Ovary (tissue), 10 donors: ENCODE measurements at regions of chr2 and their contacts with region 1.

Region 1: GRCh38 chr2:231104115-231104713 is 20.6 kb downstream of the HTR2B start:
- DNase-seq: peak; percentile 43 to 79 (median 65)
- H3K4me3 ChIP-seq: no peak overlapping the region
- H3K27ac ChIP-seq: no peak overlapping the region
- H3K4me1 ChIP-seq: no peaks in the 10 kb centered on the region
- H3K27me3 ChIP-seq: no peaks in the 10 kb centered on the region
- CTCF ChIP-seq: peak; percentile 78 to 90 (median 88)
- EP300 ChIP-seq: no peak
- POLR2A ChIP-seq: no peak

Region 2: DNA sequence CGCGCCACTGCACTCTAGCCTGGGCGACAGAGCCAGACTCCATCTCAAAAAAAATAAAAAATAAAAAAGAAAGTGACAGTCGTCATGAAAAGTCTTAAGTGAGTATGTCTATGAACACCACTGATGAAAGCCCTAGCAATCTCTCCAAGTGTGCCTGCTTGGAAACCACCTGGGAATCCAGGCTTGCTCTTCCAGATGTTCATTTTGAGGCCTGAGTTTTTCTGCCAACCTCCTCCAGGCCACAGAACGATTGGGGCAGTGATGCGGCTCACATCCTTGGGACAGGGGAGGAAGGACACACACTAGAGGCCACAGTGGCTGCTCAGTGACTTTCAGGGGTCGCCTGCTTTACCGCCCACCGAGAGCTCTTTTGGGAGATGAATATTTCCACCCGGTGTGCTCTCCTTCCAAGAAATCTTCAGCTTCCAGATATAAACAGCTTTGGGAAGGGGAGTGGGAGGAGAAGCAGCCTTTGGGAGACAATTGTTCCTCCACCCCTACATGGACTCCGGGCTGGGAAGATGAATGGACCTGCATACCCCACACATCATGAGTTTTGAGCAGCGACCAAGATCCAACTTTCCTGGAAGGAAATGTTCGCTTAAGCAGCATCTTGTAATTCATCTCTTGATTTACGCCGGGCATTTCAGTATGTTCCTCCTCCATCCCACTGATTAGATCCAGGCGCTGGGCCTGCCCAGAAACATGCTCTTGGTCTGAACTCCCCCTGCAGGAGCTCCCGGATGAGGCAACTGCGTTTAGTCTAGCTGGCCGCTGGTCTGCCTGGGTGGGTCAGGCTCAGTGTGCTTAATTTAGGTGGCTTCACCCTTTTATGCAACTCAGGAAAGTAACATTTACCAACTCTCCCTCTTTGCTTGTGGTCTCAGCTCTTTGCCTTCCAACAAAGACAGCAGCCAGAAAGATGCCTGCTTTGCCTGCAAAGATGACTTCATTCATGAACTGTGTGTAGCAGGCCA is 88.0 kb after region 1 on chr2:
- intact Hi-C with region 1: loop called (anchors 5 to 10 kb)
- DNase-seq: peak; percentile 81 to 89 (median 85)
- H3K4me3 ChIP-seq: no peak overlapping the region
- H3K27ac ChIP-seq: peak overlapping the region; percentile 69 to 88
- H3K4me1 ChIP-seq: peaks cover 8% of the 10 kb centered on the region
- H3K27me3 ChIP-seq: no peaks in the 10 kb centered on the region
- CTCF ChIP-seq: peak; percentile 40 to 71 (median 70)
- EP300 ChIP-seq: peak; percentile 58
- POLR2A ChIP-seq: no peak

Region 3: GRCh38 chr2:231198291-231199173 is 94.3 kb after region 1 on chr2 and contains the start of gene ARMC9:
- intact Hi-C with region 1: loop called (anchors 5 to 10 kb)
- DNase-seq: peak; percentile 68 to 86 (median 77)
- H3K4me3 ChIP-seq: peak within 1 kb of the TSS; percentile 77
- H3K27ac ChIP-seq: peak within 1 kb of the TSS in 1 of 2 donors; percentile 72
- H3K4me1 ChIP-seq: peaks cover 2% of the 10 kb centered on the region
- H3K27me3 ChIP-seq: no peaks in the 10 kb centered on the region
- CTCF ChIP-seq: no peak
- EP300 ChIP-seq: no peak
- POLR2A ChIP-seq: no peak
- total RNA-seq, gene ARMC9: 24.8 to 33.5 (median 29.9) TPM

Region 4: DNA sequence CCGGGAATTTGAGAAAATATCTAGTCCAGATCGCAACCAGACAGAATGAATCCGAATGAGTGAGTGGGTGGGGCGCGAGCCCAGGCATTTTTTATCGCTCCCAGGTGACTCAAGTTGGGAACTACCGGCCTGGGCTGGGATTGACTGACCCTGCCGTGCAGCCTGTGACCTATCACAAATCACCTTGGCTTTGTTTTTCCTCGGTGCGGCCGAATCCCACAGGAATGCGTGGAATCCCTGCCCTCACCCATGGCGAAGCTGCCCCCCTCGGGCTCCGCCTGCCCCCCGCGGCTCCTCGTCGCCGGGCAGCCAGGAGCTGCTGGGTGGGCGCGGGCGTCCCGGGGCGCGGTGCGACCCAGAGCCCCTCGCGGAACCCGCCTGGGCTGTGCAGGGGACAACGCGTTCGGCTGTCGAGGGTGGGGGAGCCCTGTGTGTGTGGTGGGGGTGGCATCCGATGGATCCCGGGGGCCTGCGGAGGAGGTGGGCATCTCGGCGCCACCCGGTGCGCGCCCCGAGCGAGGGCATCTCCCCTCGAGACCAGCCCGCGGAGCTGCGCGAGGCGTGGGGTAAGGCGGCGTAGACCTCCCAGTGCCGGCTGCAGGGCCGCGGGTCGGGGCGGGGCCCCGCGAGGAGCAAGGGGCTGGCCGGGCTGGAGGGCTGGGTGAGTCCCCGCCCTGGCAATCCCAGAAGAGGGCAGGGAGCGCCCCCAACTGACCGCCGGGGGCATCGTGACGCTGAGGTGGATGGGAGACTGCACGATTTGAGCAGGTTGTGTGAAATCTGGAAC is 307.8 kb after region 1 on chr2:
- intact Hi-C with region 1: loop called (anchors 5 to 10 kb)
- DNase-seq: peak; percentile 89 to 95 (median 93)
- H3K4me3 ChIP-seq: peak overlapping the region; percentile 67
- H3K27ac ChIP-seq: peak overlapping the region in 1 of 2 donors; percentile 36
- H3K4me1 ChIP-seq: peaks cover 5% of the 10 kb centered on the region
- H3K27me3 ChIP-seq: no peaks in the 10 kb centered on the region
- CTCF ChIP-seq: peak; percentile 85 to 94 (median 91)
- EP300 ChIP-seq: no peak
- POLR2A ChIP-seq: peak; percentile 21

Region 5: GRCh38 chr2:231452799-231453508 is 348.7 kb after region 1 on chr2:
- intact Hi-C with region 1: loop called in 1 of 4 experiments (anchors 5 kb)
- DNase-seq: no peak
- H3K4me3 ChIP-seq: no peak overlapping the region
- H3K27ac ChIP-seq: no peak overlapping the region
- H3K4me1 ChIP-seq: no peaks in the 10 kb centered on the region
- H3K27me3 ChIP-seq: no peaks in the 10 kb centered on the region
- CTCF ChIP-seq: no peak
- EP300 ChIP-seq: no peak
- POLR2A ChIP-seq: no peak